ENCODE measurements at regions of chr3 and their contacts with region 1.

Region 1: DNA sequence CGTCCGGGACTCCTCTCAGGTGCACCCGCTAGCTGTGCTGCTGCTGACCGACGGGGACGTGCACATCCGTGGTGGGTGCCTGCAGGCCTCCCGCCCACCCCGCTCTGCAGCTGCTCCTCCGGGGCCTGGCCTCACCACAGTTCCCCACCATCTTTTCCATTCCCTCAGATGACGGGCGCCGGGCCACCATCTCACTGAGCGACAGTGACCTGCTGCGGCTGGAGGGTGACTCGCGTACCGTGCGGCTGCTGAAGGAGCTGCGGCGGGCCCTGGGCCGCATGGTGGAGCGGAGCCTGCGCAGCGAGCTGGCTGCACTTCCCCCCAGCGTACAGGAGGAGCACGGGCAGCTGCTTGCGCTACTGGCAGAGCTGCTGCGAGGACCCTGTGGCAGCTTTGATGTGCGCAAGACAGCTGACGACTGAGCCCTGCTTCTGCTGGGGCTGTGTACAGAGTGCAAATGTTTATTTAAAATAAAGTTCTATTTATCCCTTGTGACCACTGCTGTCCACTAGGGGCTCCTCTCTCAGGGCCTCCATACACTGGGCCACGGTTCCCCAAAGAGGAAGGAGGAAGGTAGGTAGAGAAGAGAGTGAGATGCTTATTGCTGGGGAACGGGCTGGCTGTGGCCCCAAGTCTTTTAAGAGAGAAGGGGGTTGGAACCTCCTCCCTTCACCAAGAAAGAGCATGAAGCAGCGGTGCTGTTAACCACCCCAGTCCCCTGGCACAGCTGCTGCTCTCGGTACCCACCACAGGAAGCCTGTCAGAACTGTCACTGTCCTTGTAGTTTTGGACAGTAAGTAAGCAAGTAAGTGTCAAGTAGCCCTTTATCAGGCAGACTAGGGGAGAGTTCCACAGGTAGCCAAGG is 47.0 kb downstream of the DHX30 start:
- DNase-seq: no peak
- H3K4me3 ChIP-seq: no peak overlapping the region
- CTCF ChIP-seq: no peak
- POLR2A ChIP-seq: no peak

Region 2: DNA sequence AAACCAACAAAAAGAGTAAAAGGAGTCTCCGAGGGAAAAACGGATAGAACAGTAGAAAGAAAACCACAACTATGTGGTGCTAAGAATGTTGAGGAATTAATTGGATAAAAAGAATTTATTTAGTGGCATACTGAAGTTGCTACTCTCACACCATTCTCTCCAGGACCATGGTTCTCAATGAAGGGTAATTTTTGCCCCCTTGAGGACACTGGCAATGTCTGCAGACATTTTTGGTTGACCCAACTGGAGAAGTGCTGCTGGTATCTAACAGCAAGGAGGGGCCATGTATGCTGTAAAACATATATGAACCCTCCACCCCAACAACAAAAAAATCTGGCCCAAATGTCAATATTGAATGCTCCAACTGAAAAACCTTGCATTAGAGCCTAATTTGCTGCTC is 185.4 kb before region 1 on chr3:
- intact Hi-C with region 1: no loop called
- DNase-seq: no peak
- H3K4me3 ChIP-seq: no peak overlapping the region
- CTCF ChIP-seq: no peak
- POLR2A ChIP-seq: no peak

Region 3: GRCh38 chr3:48151058-48151806 is 301.3 kb after region 1 on chr3:
- intact Hi-C with region 1: loop called (anchors 10 kb)
- DNase-seq: peak; percentile 57 to 90
- H3K4me3 ChIP-seq: no peak overlapping the region
- CTCF ChIP-seq: peak in 1 of 3 donors; percentile 32
- POLR2A ChIP-seq: no peak